Activated CD4-positive, alpha-beta memory T cell treated with anti-CD3 and anti-CD28 coated beads for 36 hours (primary cell): ENCODE measurements at regions of chr4 and their contacts with region 1.

Region 1: GRCh38 chr4:15034071-15034764 is 31.9 kb downstream of the CPEB2 start:
- DNase-seq: no peak
- H3K4me3 Mint-ChIP-seq: no peak overlapping the region
- H3K27ac Mint-ChIP-seq: no peak overlapping the region
- H3K4me1 Mint-ChIP-seq: peaks cover 28% of the 10 kb centered on the region
- H3K27me3 Mint-ChIP-seq: no peaks in the 10 kb centered on the region

Region 2: DNA sequence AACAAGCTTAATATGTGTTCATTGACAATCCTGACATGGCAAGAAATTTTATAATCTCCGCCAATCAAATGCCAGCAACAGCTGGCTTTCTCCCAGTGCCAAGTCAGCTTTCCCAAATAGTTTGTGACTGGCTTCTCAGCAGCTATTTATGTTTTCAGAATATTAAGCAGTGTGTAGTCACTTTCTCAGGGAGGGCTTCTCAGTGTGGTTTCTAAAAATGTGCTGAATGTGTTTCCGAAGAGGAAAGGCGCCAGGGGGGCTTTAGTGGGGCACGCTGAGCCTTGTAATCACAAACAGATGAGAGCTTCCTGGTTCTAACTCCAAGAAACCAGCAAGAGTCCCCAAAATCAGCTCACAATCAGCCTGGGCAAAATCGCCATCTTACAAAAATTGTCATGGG is 290.6 kb before region 1 on chr4:
- CTCF ChIA-PET with region 1: no interaction called
- POLR2A ChIA-PET with region 1: no interaction called
- intact Hi-C with region 1: no loop called
- DNase-seq: no peak
- H3K4me3 Mint-ChIP-seq: no peak overlapping the region
- H3K27ac Mint-ChIP-seq: no peak overlapping the region
- H3K4me1 Mint-ChIP-seq: no peaks in the 10 kb centered on the region
- H3K27me3 Mint-ChIP-seq: peaks cover 14% of the 10 kb centered on the region

Region 3: GRCh38 chr4:15420642-15421041 is 386.4 kb after region 1 on chr4:
- CTCF ChIA-PET with region 1: no interaction called
- POLR2A ChIA-PET with region 1: no interaction called
- intact Hi-C with region 1: loop called (anchors 10 kb)
- DNase-seq: no peak
- H3K4me3 Mint-ChIP-seq: no peak overlapping the region
- H3K27ac Mint-ChIP-seq: no peak overlapping the region
- H3K4me1 Mint-ChIP-seq: peaks cover 27% of the 10 kb centered on the region
- H3K27me3 Mint-ChIP-seq: peaks cover 1% of the 10 kb centered on the region